Activated CD4-positive, alpha-beta T cell treated with anti-CD3 and anti-CD28 coated beads, Interleukin-2, amount 10 ng/mL, durations not matched to agents 24 days and 14 days (primary cell): ENCODE measurements at regions of chrX and their contacts with region 1.

Region 1: DNA sequence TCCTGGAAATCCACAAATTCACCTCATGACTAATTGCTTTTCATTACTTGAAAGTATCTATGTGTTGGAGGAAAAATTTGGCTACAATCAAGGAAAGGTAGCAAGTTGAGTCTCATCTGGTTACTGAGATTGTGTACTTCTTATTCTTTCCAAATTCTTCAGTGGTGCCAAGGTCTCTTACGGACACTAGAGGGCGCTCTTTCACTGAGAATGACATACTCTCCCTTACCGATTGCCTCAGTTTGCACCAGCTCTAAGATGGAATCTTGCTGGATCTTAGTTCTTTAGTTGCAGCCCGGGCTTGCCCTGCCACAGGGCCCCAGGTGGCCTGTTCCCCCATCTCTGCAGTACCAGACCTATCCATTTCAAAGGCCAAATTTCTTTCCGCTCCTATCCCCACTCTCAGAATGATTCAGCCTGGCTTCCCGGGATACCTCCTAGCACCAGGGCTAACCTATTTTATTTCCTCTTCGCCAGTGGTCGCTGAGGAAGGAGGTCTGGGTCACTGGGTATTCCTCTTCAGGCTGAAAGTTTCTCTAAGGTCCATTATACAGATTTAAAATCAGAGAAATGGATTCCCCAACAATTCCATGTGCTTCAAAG is 24.6 kb upstream of the GPR50 start:
- DNase-seq: peak; percentile 73
- H3K4me3 Mint-ChIP-seq: no peak overlapping the region
- H3K27ac Mint-ChIP-seq: no peak overlapping the region
- H3K4me1 Mint-ChIP-seq: no peaks in the 10 kb centered on the region
- H3K27me3 Mint-ChIP-seq: peaks cover 17% of the 10 kb centered on the region

Region 2: DNA sequence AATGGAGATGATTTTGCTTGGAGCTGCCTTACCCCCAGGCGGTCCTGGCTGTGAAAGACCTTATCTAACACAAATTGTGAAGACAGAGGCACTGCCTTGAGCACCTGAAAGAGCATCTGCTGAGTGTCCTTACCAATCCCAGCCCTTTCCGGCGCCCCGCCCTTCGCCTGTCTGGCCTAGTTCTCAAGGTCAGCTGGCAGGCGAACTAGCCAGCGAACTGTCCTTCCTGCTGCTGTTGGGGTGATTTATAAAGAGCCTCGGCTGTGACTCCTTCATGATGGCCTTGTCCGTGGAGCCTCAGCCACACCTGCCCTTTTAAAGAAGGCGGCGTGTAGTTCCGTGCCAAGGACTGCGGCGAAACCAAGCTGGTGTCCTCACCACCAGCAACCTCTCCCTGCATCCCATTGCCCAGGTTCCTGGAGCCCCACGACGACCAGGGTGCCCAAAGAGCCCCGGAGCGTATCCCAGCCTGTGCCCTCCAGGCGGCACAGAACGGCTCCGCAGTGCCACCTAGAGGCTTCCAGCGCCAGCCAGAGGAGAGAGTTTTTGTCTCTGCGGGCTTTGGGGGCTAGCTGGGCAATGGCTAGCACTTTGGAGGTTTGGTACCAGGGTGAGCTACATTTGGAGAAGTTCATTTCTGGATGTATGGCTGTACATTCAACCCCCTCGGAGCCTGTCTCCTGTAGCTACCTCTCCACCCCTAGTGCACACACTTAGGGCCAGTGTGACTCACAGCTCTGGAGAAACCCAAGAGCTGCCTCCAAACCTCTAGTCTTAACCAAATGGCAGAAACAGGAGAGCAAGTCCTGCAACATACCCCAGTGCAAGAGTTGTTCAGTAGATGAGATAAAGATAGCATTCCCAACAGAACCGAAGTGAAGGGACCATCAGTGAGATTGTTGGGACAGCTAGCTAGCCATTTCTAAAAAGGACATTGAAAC is 208.4 kb after region 1 on chrX:
- intact Hi-C with region 1: loop called (anchors 1 kb)
- DNase-seq: peak; percentile 76
- H3K4me3 Mint-ChIP-seq: peak overlapping the region; percentile 26
- H3K27ac Mint-ChIP-seq: no peak overlapping the region
- H3K4me1 Mint-ChIP-seq: no peaks in the 10 kb centered on the region
- H3K27me3 Mint-ChIP-seq: peaks cover 13% of the 10 kb centered on the region

Region 3: GRCh38 chrX:151488677-151489076 is 336.9 kb after region 1 on chrX:
- intact Hi-C with region 1: loop called (anchors 10 kb)
- DNase-seq: peak; percentile 57
- H3K4me3 Mint-ChIP-seq: no peak overlapping the region
- H3K27ac Mint-ChIP-seq: no peak overlapping the region
- H3K4me1 Mint-ChIP-seq: peaks cover 2% of the 10 kb centered on the region
- H3K27me3 Mint-ChIP-seq: no peaks in the 10 kb centered on the region